ENCODE measurements at regions of chr4 and their contacts with region 1.

Region 1: GRCh38 chr4:139177868-139178611 is 1.0 kb upstream of the ELF2 start:
- DNase-seq: no peak
- ATAC-seq: peak; percentile 84
- H3K4me3 ChIP-seq: peak overlapping the region; percentile 85
- H3K27ac ChIP-seq: peak overlapping the region; percentile 85
- H3K4me1 ChIP-seq: no peaks in the 10 kb centered on the region; the same call in 1 of the 2 replicates
- H3K27me3 ChIP-seq: no peaks in the 10 kb centered on the region
- CTCF ChIP-seq: no peak

Region 2: DNA sequence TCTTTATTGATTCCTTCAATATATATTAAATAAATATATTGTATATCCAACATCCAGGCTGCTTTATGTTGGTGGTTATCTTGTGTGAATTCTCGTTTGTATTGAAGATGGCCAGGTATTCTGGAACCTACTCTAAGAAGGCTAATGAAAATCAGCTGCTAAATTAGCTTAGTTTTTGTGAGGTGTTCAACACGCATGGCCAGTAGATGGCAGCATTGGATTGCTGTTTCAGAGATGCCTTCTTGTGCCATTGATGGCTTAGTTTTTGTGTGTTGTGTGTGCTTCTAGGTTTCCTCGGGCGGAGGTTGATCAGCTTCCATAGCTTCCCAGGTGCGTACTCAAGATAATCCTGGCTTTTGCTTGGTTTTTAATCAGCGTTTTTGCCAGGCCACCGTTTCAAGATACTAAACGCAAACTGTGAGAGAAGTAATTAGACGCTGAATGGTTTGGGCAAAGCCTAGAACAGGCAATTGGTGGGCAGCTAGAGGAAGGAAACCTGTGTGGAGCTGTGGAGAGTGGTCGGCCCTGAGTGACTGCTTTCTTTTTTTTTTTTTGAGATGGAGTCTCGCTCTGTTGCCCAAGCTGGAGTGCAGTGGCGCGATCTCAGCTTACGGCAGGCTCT is 147.3 kb before region 1 on chr4:
- CTCF ChIA-PET with region 1: no interaction called
- POLR2A ChIA-PET with region 1: no interaction called
- in situ Hi-C with region 1: no loop called
- intact Hi-C with region 1: no loop called
- DNase-seq: peak; percentile 54
- ATAC-seq: peak; percentile 51; the same call in 1 of the 2 replicates
- H3K4me3 ChIP-seq: no peak overlapping the region
- H3K27ac ChIP-seq: no peak overlapping the region
- H3K4me1 ChIP-seq: peaks cover 14% of the 10 kb centered on the region
- H3K27me3 ChIP-seq: no peaks in the 10 kb centered on the region
- CTCF ChIP-seq: peak; percentile 78

Region 3: GRCh38 chr4:139144161-139144859 is 33.7 kb before region 1 on chr4:
- CTCF ChIA-PET with region 1: no interaction called
- POLR2A ChIA-PET with region 1: interaction called, 10 read pairs
- in situ Hi-C with region 1: no loop called
- intact Hi-C with region 1: no loop called
- DNase-seq: no peak
- ATAC-seq: no peak
- H3K4me3 ChIP-seq: no peak overlapping the region
- H3K27ac ChIP-seq: no peak overlapping the region
- H3K4me1 ChIP-seq: no peaks in the 10 kb centered on the region
- H3K27me3 ChIP-seq: no peaks in the 10 kb centered on the region
- CTCF ChIP-seq: no peak

Region 4: DNA sequence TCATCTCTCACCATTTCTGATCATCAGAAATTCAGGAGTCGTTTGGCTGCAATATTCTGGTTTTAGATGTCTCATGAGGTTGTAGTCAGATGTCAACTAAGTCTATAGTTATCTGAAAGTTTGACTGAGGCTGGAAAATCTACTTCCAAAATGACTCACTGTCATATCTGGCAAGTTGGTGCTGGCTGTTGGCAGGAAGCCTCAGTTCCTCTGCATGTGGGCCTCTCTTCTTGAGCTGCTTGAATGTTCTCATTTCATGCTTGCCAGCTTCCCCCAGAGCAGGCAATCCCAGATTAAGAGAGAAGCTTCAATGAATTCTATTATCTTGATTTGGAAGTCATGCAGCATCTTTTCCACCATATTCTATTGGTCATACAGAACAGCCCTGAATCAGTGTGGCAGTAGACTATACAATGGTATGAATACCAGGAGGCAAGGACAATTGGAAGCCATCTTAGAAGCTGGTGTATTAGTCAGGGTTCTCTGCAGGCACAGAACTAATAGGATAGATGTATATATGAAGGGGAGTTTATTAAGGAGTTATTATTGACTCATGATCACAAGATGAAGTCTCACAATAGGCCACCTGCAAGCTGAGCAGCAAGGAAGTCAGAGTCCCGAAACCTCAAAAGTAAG is 45.8 kb after region 1 on chr4:
- CTCF ChIA-PET with region 1: no interaction called
- POLR2A ChIA-PET with region 1: no interaction called
- in situ Hi-C with region 1: no loop called
- intact Hi-C with region 1: no loop called
- DNase-seq: no peak
- ATAC-seq: no peak
- H3K4me3 ChIP-seq: no peak overlapping the region
- H3K27ac ChIP-seq: no peak overlapping the region
- H3K4me1 ChIP-seq: no peaks in the 10 kb centered on the region
- H3K27me3 ChIP-seq: no peaks in the 10 kb centered on the region
- CTCF ChIP-seq: no peak

Measured in Panc1 (cell line).